GM18951 (cell line): ENCODE measurements at regions of chr5 and their contacts with region 1.

Region 1: GRCh38 chr5:73448463-73449136 is at the start of gene FOXD1:
- POLR2A ChIP-seq: no peak

Region 2: GRCh38 chr5:73303148-73304079 is 145.2 kb before region 1 on chr5:
- in situ Hi-C with region 1: loop called (anchors 10 kb)
- POLR2A ChIP-seq: no peak